ENCODE measurements at regions of chr3 and their contacts with region 1.

Region 1: GRCh38 chr3:36868614-36869436 is 76.0 kb downstream of the TRANK1 start:
- DNase-seq: peak; percentile 59 to 69
- ATAC-seq: peak; percentile 97 to 98
- H3K4me3 ChIP-seq: no peak overlapping the region
- H3K27ac ChIP-seq: no peak overlapping the region
- H3K4me1 ChIP-seq: no peaks in the 10 kb centered on the region
- CTCF ChIP-seq: peak; percentile 83
- EP300 ChIP-seq: no peak
- POLR2A ChIP-seq: no peak
- RAD21 ChIP-seq: peak; percentile 72 to 80

Region 2: DNA sequence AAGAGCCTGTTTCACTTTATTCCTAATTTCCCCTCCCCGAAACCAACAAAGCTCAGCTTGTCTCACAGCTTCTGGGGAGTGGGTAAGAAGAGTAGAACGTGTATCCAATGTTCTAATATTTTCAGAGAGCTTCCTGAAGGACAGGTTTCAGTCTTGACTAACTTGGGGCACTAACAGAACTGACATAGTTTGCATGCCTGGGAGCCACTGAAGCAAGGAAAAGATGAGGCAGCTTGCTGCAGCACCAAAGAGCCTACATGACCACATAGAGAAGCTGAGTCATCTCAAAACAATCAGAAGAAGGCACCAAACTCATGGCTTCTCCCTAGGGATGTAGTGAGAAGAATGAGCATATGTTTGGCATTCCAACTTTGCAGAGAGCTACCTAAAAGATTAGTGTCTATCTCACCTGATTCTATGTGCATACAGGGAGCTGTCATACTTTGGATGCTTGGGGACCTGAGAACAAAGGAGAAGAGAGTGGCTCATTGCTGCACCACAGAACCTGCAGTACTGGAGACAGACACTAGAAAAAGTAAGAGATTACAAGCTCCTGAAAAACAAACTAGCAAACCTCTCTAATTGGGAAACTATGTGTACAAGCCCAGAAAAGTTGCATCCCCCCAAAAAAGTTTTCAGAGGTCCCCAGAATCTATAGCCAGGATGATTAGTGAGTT is 191.4 kb before region 1 on chr3:
- CTCF ChIA-PET with region 1: no interaction called
- POLR2A ChIA-PET with region 1: no interaction called
- DNase-seq: peak; percentile 16 to 51
- ATAC-seq: peak; percentile 59 to 78; a peak in 5 of 6 replicates
- H3K4me3 ChIP-seq: no peak overlapping the region
- H3K27ac ChIP-seq: peak overlapping the region; percentile 20 to 79; a peak in 5 of 6 replicates
- H3K4me1 ChIP-seq: peaks cover 12% of the 10 kb centered on the region; the same call in 2 of the 3 replicates
- CTCF ChIP-seq: no peak
- EP300 ChIP-seq: no peak
- POLR2A ChIP-seq: no peak
- RAD21 ChIP-seq: no peak

Region 3: DNA sequence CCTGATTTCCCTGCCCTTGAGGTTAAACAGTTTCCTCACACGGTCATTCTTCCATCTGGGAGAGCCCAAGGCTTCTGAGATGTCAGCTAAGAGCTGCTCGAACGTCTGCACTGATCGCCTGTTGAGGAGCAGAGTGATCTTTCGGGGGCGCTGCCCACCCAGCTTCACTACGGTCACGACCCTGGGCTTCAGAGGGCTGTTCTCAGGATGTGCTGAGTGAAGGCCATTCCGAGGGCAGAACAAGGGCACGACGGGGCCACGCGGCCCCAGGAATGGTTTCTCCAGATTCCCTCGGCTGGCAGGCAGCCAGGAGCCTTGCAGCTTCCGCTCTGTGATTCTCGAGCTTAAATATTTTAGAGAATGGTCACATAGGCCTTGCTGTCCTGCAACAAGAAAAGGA is 130.1 kb before region 1 on chr3:
- CTCF ChIA-PET with region 1: interaction called, 26 read pairs
- POLR2A ChIA-PET with region 1: no interaction called
- DNase-seq: no peak
- ATAC-seq: no peak
- H3K4me3 ChIP-seq: no peak overlapping the region
- H3K27ac ChIP-seq: no peak overlapping the region
- H3K4me1 ChIP-seq: no peaks in the 10 kb centered on the region
- CTCF ChIP-seq: no peak
- EP300 ChIP-seq: no peak
- POLR2A ChIP-seq: no peak
- RAD21 ChIP-seq: no peak

Region 4: GRCh38 chr3:36792342-36792741 is 76.5 kb before region 1 on chr3:
- CTCF ChIA-PET with region 1: interaction called, 21 read pairs
- POLR2A ChIA-PET with region 1: no interaction called
- DNase-seq: peak; percentile 8 to 37
- ATAC-seq: peak; percentile 92 to 98
- H3K4me3 ChIP-seq: no peak overlapping the region
- H3K27ac ChIP-seq: no peak overlapping the region
- H3K4me1 ChIP-seq: no peaks in the 10 kb centered on the region
- CTCF ChIP-seq: peak; percentile 46
- EP300 ChIP-seq: no peak
- POLR2A ChIP-seq: no peak
- RAD21 ChIP-seq: peak; percentile 62 to 79